ENCODE measurements at regions of chr4 and their contacts with region 1.

Region 1: GRCh38 chr4:170027181-170027829 is 1.1 kb upstream of the MFAP3L start:
- DNase-seq: peak; percentile 72 to 98
- H3K4me3 ChIP-seq: peak overlapping the region; percentile 71 to 98 (median 78)
- H3K27ac ChIP-seq: no peak overlapping the region
- H3K4me1 ChIP-seq: peaks cover 0 to 3% (median 3%) of the 10 kb centered on the region in 4 experiments; a peak in 4 of 7 replicates
- H3K27me3 ChIP-seq: peaks cover 4 to 29% (median 22%) of the 10 kb centered on the region in 4 experiments
- CTCF ChIP-seq: no peak
- EP300 ChIP-seq: peak in 1 of 2 experiments; percentile 61; a peak in 1 of 3 replicates
- POLR2A ChIP-seq: no peak; a peak in 1 of 3 replicates
- RAD21 ChIP-seq: no peak; a peak in 1 of 4 replicates

Region 2: GRCh38 chr4:169902658-169903345 is 124.5 kb before region 1 on chr4:
- CTCF ChIA-PET with region 1: no interaction called
- POLR2A ChIA-PET with region 1: no interaction called
- DNase-seq: no peak
- H3K4me3 ChIP-seq: no peak overlapping the region
- H3K27ac ChIP-seq: no peak overlapping the region
- H3K4me1 ChIP-seq: no peaks in the 10 kb centered on the region; a peak in 1 of 7 replicates
- H3K27me3 ChIP-seq: no peaks in the 10 kb centered on the region
- CTCF ChIP-seq: peak in 2 of 3 experiments; percentile 48 to 73; a peak in 3 of 4 replicates
- EP300 ChIP-seq: no peak
- POLR2A ChIP-seq: no peak
- RAD21 ChIP-seq: peak; percentile 73 to 76

Region 3: DNA sequence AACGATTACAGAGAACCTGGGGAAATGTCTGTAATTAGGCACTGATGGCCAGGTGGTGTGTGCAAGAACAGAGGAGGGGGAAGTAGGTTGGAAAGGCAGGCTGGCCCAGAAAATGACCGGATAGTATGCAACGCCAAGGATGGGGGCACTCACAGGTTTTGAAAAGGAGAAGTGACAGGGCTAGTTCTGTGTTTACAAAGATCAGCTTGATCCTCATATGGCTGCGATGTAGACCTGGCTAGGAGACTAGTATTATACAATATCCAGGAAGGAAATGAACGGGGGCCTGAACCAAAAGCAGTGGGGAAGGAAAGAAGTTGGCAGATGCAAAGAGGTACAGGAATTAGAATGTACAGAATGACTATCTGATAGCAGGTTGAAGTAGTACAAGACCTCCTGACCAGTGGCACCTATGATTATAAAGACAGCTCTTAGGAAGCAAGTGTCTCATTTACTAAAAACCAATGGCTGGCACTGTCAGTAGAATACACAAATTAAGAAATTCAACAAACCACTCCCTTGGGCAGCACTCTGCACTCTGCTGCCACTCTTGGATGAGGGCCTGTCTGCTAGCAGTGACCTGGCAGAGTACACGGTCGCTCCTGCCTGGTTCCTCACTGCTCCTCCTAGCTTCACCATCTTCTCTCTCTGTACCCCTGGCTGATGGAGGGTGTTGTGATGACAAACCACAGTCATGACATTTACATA is 15.2 kb before region 1 on chr4:
- CTCF ChIA-PET with region 1: interaction called, 10 read pairs
- POLR2A ChIA-PET with region 1: interaction called, 4 read pairs
- DNase-seq: peak in 1 of 2 experiments; percentile 23
- H3K4me3 ChIP-seq: no peak overlapping the region
- H3K27ac ChIP-seq: no peak overlapping the region
- H3K4me1 ChIP-seq: peaks cover 0 to 7% (median 1%) of the 10 kb centered on the region in 4 experiments; a peak in 1 of 7 replicates
- H3K27me3 ChIP-seq: no peaks in the 10 kb centered on the region
- CTCF ChIP-seq: no peak
- EP300 ChIP-seq: no peak
- POLR2A ChIP-seq: no peak
- RAD21 ChIP-seq: no peak

Region 4: DNA sequence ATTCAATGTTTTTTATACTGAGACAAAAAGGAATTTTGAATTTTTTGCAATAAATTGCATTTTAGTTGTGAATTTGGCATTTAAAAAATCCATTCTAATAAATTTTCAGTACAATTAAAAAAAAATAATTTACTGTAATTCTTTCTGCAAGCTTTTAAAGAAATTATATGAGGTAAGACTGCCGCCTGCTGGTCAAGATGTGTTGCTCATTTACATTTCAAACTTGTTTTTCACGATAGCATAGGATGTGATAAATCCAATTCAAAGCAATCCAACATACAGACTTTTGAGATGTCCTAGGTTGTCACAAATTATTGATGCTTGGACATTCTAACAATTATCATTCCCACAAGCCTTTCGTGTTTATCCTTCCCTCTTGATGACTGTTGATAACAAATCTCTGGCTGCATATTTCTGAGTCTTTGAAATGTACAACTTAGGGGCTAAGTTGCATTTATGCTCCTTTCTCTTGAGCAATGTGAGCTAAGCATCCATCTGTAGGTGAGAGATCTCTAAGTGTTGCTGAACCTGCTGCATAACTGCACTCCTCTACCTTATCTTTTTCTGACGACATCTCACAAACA is 20.6 kb after region 1 on chr4:
- CTCF ChIA-PET with region 1: no interaction called
- POLR2A ChIA-PET with region 1: no interaction called
- DNase-seq: no peak
- H3K4me3 ChIP-seq: no peak overlapping the region
- H3K27ac ChIP-seq: no peak overlapping the region
- H3K4me1 ChIP-seq: no peaks in the 10 kb centered on the region
- H3K27me3 ChIP-seq: no peaks in the 10 kb centered on the region
- CTCF ChIP-seq: peak in 2 of 3 experiments; percentile 52 to 62; a peak in 2 of 4 replicates
- EP300 ChIP-seq: no peak
- POLR2A ChIP-seq: no peak
- RAD21 ChIP-seq: peak; percentile 78

Measured in H1 (cell line).